ENCODE measurements at regions of chr15 and their contacts with region 1.

Region 1: DNA sequence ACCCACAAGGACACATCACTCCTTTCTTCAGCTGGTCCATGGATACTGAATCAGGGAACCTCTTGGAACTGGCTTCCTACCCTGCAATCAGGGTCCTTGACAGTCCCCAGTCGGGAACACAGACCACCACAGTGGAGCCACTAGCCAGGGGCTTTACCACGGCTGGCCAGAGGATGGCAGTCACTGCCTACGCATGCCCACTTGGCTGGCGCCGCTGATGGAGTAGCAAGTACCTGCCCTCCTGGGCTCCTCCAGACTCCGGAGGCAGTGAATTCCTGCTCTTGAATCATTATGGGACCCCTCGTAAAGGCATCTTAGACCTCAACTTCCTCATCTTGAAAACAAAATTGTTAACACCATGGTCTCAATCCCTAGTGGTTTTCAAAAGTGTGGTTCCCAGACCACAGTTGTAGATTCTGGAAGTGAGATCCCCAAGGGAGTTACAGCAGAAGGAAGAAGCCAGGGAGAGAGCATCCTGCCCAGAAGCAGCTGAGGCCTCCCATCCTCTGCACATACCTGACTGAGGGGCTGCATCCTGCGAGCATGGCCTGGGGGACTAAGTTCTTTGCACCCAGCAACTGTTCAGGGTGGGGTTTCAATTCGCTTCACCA is 9.1 kb upstream of the SKIC8 start:
- DNase-seq: peak; percentile 44 to 66 (median 65)
- H3K4me3 ChIP-seq: peak overlapping the region in 1 of 3 experiments; percentile 25
- H3K4me3 Mint-ChIP-seq: peak overlapping the region; percentile 62 to 78
- H3K27ac ChIP-seq: peak overlapping the region; percentile 75 to 79
- H3K27ac Mint-ChIP-seq: peak overlapping the region in 5 of 7 donors; percentile 81 to 94 (median 90)
- H3K4me1 ChIP-seq: peaks cover 30 to 34% of the 10 kb centered on the region in 2 donors
- H3K4me1 Mint-ChIP-seq: peaks cover 27% of the 10 kb centered on the region
- H3K27me3 ChIP-seq: no peaks in the 10 kb centered on the region
- H3K27me3 Mint-ChIP-seq: peaks cover 0 to 5% (median 0%) of the 10 kb centered on the region in 3 donors
- CTCF ChIP-seq: peak; percentile 92

Region 2: GRCh38 chr15:77966540-77967290 is 341.8 kb before region 1 on chr15:
- intact Hi-C with region 1: no loop called
- DNase-seq: peak; percentile 22 to 43 (median 40)
- H3K4me3 ChIP-seq: no peak overlapping the region
- H3K4me3 Mint-ChIP-seq: no peak overlapping the region
- H3K27ac ChIP-seq: no peak overlapping the region
- H3K27ac Mint-ChIP-seq: no peak overlapping the region
- H3K4me1 ChIP-seq: no peaks in the 10 kb centered on the region
- H3K4me1 Mint-ChIP-seq: no peaks in the 10 kb centered on the region
- H3K27me3 ChIP-seq: no peaks in the 10 kb centered on the region
- H3K27me3 Mint-ChIP-seq: peaks cover 4 to 7% (median 6%) of the 10 kb centered on the region in 3 donors
- CTCF ChIP-seq: peak; percentile 87

Region 3: GRCh38 chr15:78241007-78241406 is 67.5 kb before region 1 on chr15:
- intact Hi-C with region 1: no loop called
- DNase-seq: peak; percentile 63 to 69 (median 67)
- H3K4me3 ChIP-seq: no peak overlapping the region
- H3K4me3 Mint-ChIP-seq: no peak overlapping the region
- H3K27ac ChIP-seq: no peak overlapping the region
- H3K27ac Mint-ChIP-seq: no peak overlapping the region
- H3K4me1 ChIP-seq: peaks cover 5% of the 10 kb centered on the region in 2 donors
- H3K4me1 Mint-ChIP-seq: peaks cover 2% of the 10 kb centered on the region
- H3K27me3 ChIP-seq: no peaks in the 10 kb centered on the region
- H3K27me3 Mint-ChIP-seq: peaks cover 0 to 2% (median 1%) of the 10 kb centered on the region in 3 donors
- CTCF ChIP-seq: peak; percentile 83

Region 4: GRCh38 chr15:78422571-78423340 is 114.2 kb after region 1 on chr15:
- intact Hi-C with region 1: loop called (anchors 2 kb)
- DNase-seq: peak; percentile 43 to 69 (median 66)
- H3K4me3 ChIP-seq: no peak overlapping the region
- H3K4me3 Mint-ChIP-seq: no peak overlapping the region
- H3K27ac ChIP-seq: no peak overlapping the region
- H3K27ac Mint-ChIP-seq: peak overlapping the region in 1 of 7 donors; percentile 61
- H3K4me1 ChIP-seq: peaks cover 26 to 32% of the 10 kb centered on the region in 2 donors
- H3K4me1 Mint-ChIP-seq: peaks cover 38% of the 10 kb centered on the region
- H3K27me3 ChIP-seq: no peaks in the 10 kb centered on the region
- H3K27me3 Mint-ChIP-seq: peaks cover 0 to 1% (median 0%) of the 10 kb centered on the region in 3 donors
- CTCF ChIP-seq: peak; percentile 95

Region 5: GRCh38 chr15:78481917-78482316 is 173.4 kb after region 1 on chr15:
- intact Hi-C with region 1: loop called in 1 of 2 experiments (anchors 2 kb)
- DNase-seq: no peak
- H3K4me3 ChIP-seq: no peak overlapping the region
- H3K4me3 Mint-ChIP-seq: no peak overlapping the region
- H3K27ac ChIP-seq: no peak overlapping the region
- H3K27ac Mint-ChIP-seq: no peak overlapping the region
- H3K4me1 ChIP-seq: no peaks in the 10 kb centered on the region
- H3K4me1 Mint-ChIP-seq: no peaks in the 10 kb centered on the region
- H3K27me3 ChIP-seq: no peaks in the 10 kb centered on the region
- H3K27me3 Mint-ChIP-seq: peaks cover 0 to 2% (median 0%) of the 10 kb centered on the region in 3 donors
- CTCF ChIP-seq: no peak

Region 6: GRCh38 chr15:78872972-78873792 is 564.7 kb after region 1 on chr15:
- intact Hi-C with region 1: loop called in 1 of 2 experiments (anchors 10 kb)
- DNase-seq: peak; percentile 76 to 87 (median 82)
- H3K4me3 ChIP-seq: peak overlapping the region; percentile 95 to 100 (median 96)
- H3K4me3 Mint-ChIP-seq: peak overlapping the region; percentile 97 to 98
- H3K27ac ChIP-seq: peak overlapping the region; percentile 98 to 100
- H3K27ac Mint-ChIP-seq: peak overlapping the region; percentile 100
- H3K4me1 ChIP-seq: peaks cover 42 to 43% of the 10 kb centered on the region in 2 donors
- H3K4me1 Mint-ChIP-seq: peaks cover 35% of the 10 kb centered on the region
- H3K27me3 ChIP-seq: no peaks in the 10 kb centered on the region
- H3K27me3 Mint-ChIP-seq: peaks cover 1 to 2% (median 2%) of the 10 kb centered on the region in 3 donors
- CTCF ChIP-seq: no peak